ENCODE measurements at regions of chr10 and their contacts with region 1.

Region 1: DNA sequence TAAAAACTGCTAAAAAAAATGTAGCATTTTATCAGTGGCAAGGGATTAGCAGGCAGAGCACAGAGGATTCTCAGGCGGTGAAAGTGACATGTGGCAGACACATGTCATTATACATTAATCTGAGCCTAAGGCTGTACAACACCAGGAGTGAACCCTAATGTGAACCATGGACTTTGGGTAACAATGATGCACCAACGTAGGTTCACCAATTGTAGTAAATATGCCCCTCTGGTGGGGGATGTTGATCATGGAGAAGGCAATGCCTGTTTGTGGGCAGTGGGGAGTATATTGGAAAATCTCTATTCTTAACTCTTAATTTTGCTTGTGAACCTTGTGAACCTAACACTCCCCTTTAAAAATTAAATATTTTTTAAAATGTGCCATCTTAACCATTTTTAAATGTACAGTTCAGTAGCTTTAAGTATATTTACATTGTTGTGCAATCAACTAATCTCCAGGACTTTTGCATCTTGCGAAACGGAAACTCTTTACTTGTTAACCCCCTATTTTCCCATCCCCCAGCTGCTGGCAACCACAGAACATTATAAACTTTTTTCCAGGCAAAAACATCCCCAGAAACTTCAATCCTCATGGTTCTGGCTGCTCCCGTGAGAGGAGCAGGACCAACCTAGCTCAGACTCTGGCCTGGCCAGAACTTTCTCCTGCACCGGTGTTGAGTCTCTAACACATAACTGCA is 29.9 kb downstream of the LRRC20 start:
- DNase-seq: peak; percentile 49
- ATAC-seq: no peak
- H3K4me3 ChIP-seq: no peak overlapping the region
- H3K27ac ChIP-seq: peak overlapping the region; percentile 67; the same call in 1 of the 2 replicates
- H3K4me1 ChIP-seq: peaks cover 14% of the 10 kb centered on the region
- H3K27me3 ChIP-seq: 0 out of 2 replicates have a peak, but pooled peaks cover 3% of the 10 kb centered on the region
- CTCF ChIP-seq: no peak
- POLR2A ChIP-seq: no peak
- RAD21 ChIP-seq: no peak

Region 2: GRCh38 chr10:70292004-70292403 is 60.5 kb before region 1 on chr10:
- CTCF ChIA-PET with region 1: no interaction called
- POLR2A ChIA-PET with region 1: no interaction called
- dilution Hi-C with region 1: no loop called
- in situ Hi-C with region 1: no loop called
- intact Hi-C with region 1: no loop called
- DNase-seq: no peak
- ATAC-seq: no peak
- H3K4me3 ChIP-seq: no peak overlapping the region
- H3K27ac ChIP-seq: no peak overlapping the region
- H3K4me1 ChIP-seq: no peaks in the 10 kb centered on the region; the same call in none of the 2 replicates
- H3K27me3 ChIP-seq: peaks cover 8% of the 10 kb centered on the region
- CTCF ChIP-seq: no peak
- POLR2A ChIP-seq: no peak
- RAD21 ChIP-seq: no peak

Region 3: GRCh38 chr10:70302292-70302691 is 50.3 kb before region 1 on chr10:
- CTCF ChIA-PET with region 1: no interaction called
- POLR2A ChIA-PET with region 1: no interaction called
- dilution Hi-C with region 1: no loop called
- in situ Hi-C with region 1: no loop called
- intact Hi-C with region 1: loop called (anchors 2 kb)
- DNase-seq: peak; percentile 58
- ATAC-seq: peak; percentile 54
- H3K4me3 ChIP-seq: no peak overlapping the region
- H3K27ac ChIP-seq: peak overlapping the region; percentile 71; the same call in 1 of the 2 replicates
- H3K4me1 ChIP-seq: peaks cover 2% of the 10 kb centered on the region; the same call in 1 of the 2 replicates
- H3K27me3 ChIP-seq: no peaks in the 10 kb centered on the region
- CTCF ChIP-seq: no peak
- POLR2A ChIP-seq: no peak
- RAD21 ChIP-seq: no peak